A549 (cell line): ENCODE measurements at regions of chr2 and their contacts with region 1.

Region 1: GRCh38 chr2:31138037-31138962 is at the start of gene GALNT14:
- DNase-seq: peak; percentile 85 to 96
- ATAC-seq: peak; percentile 89 to 92
- H3K4me3 ChIP-seq: peak within 1 kb of the TSS; percentile 63
- H3K27ac ChIP-seq: peak within 1 kb of the TSS; percentile 79 to 88
- H3K4me1 ChIP-seq: peaks cover 11% of the 10 kb centered on the region
- CTCF ChIP-seq: peak; percentile 88
- EP300 ChIP-seq: no peak
- POLR2A ChIP-seq: no peak; the same call in none of the 2 replicates
- RAD21 ChIP-seq: peak; percentile 63 to 65
- polyA plus RNA-seq, gene GALNT14: 34.4 and 40.1 TPM in 2 replicates

Region 2: GRCh38 chr2:30862054-30862651 is 276.1 kb before region 1 on chr2:
- CTCF ChIA-PET with region 1: interaction called, 14 read pairs
- POLR2A ChIA-PET with region 1: no interaction called
- DNase-seq: peak; percentile 59 to 87
- ATAC-seq: peak; percentile 68 to 87; a peak in 5 of 6 replicates
- H3K4me3 ChIP-seq: no peak overlapping the region
- H3K27ac ChIP-seq: no peak overlapping the region
- H3K4me1 ChIP-seq: no peaks in the 10 kb centered on the region
- CTCF ChIP-seq: peak; percentile 96
- EP300 ChIP-seq: no peak
- POLR2A ChIP-seq: no peak
- RAD21 ChIP-seq: peak; percentile 73 to 80

Region 3: GRCh38 chr2:31008561-31009114 is 129.7 kb before region 1 on chr2:
- CTCF ChIA-PET with region 1: interaction called, 10 read pairs
- POLR2A ChIA-PET with region 1: no interaction called
- DNase-seq: no peak
- ATAC-seq: no peak
- H3K4me3 ChIP-seq: no peak overlapping the region
- H3K27ac ChIP-seq: no peak overlapping the region
- H3K4me1 ChIP-seq: no peaks in the 10 kb centered on the region
- CTCF ChIP-seq: no peak
- EP300 ChIP-seq: no peak
- POLR2A ChIP-seq: no peak
- RAD21 ChIP-seq: no peak

Region 4: GRCh38 chr2:31125918-31126695 is 12.2 kb before region 1 on chr2:
- CTCF ChIA-PET with region 1: interaction called, 21 read pairs
- POLR2A ChIA-PET with region 1: interaction called, 3 read pairs
- DNase-seq: peak in 1 of 2 experiments; percentile 32
- ATAC-seq: peak; percentile 53 to 72; a peak in 4 of 6 replicates
- H3K4me3 ChIP-seq: no peak overlapping the region
- H3K27ac ChIP-seq: peak overlapping the region; percentile 55 to 76
- H3K4me1 ChIP-seq: peaks cover 24% of the 10 kb centered on the region
- CTCF ChIP-seq: no peak
- EP300 ChIP-seq: no peak
- POLR2A ChIP-seq: no peak
- RAD21 ChIP-seq: no peak

Region 5: GRCh38 chr2:31170071-31170698 is 31.9 kb after region 1 on chr2:
- CTCF ChIA-PET with region 1: interaction called, 102 read pairs
- POLR2A ChIA-PET with region 1: no interaction called
- DNase-seq: peak; percentile 78 to 84
- ATAC-seq: peak; percentile 92 to 98
- H3K4me3 ChIP-seq: no peak overlapping the region
- H3K27ac ChIP-seq: no peak overlapping the region
- H3K4me1 ChIP-seq: no peaks in the 10 kb centered on the region
- CTCF ChIP-seq: peak; percentile 97
- EP300 ChIP-seq: no peak
- POLR2A ChIP-seq: no peak
- RAD21 ChIP-seq: peak; percentile 96 to 98

Region 6: DNA sequence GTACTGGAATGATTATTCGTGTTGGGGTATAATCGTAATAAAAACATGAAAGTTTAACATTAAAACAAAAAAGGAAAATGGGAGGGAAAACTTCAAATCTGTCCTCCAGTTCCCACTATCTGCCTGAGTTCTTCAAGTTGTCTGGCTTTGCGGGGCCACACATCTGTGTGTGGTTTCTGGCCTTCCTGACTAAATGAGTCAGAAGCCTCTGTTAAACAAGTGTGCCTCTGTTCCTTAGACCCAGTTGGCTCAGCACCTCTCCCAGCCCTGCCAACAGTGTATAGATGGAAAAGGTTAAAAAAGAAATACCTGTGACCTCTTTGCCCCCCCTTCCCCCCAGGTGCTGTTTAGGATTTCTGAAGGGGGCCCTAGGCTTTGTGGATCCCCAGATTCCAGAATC is 246.1 kb after region 1 on chr2:
- CTCF ChIA-PET with region 1: no interaction called
- POLR2A ChIA-PET with region 1: no interaction called
- DNase-seq: peak; percentile 81 to 89
- ATAC-seq: peak; percentile 88
- H3K4me3 ChIP-seq: no peak overlapping the region
- H3K27ac ChIP-seq: peak overlapping the region; percentile 88 to 89
- H3K4me1 ChIP-seq: peaks cover 57% of the 10 kb centered on the region
- CTCF ChIP-seq: no peak
- EP300 ChIP-seq: no peak
- POLR2A ChIP-seq: no peak
- RAD21 ChIP-seq: no peak

Region 7: GRCh38 chr2:31704561-31705212 is 566.4 kb after region 1 on chr2:
- CTCF ChIA-PET with region 1: no interaction called
- POLR2A ChIA-PET with region 1: no interaction called
- DNase-seq: peak in 1 of 2 experiments; percentile 29
- ATAC-seq: peak; percentile 34 to 58; a peak in 2 of 6 replicates
- H3K4me3 ChIP-seq: no peak overlapping the region
- H3K27ac ChIP-seq: peak overlapping the region in 1 of 2 experiments; percentile 25; a peak in 2 of 6 replicates
- H3K4me1 ChIP-seq: peaks cover 6% of the 10 kb centered on the region; the same call in 1 of the 3 replicates
- CTCF ChIP-seq: no peak
- EP300 ChIP-seq: no peak
- POLR2A ChIP-seq: no peak
- RAD21 ChIP-seq: no peak